HepG2 (cell line): ENCODE measurements at regions of chr5 and their contacts with region 1.

Region 1: DNA sequence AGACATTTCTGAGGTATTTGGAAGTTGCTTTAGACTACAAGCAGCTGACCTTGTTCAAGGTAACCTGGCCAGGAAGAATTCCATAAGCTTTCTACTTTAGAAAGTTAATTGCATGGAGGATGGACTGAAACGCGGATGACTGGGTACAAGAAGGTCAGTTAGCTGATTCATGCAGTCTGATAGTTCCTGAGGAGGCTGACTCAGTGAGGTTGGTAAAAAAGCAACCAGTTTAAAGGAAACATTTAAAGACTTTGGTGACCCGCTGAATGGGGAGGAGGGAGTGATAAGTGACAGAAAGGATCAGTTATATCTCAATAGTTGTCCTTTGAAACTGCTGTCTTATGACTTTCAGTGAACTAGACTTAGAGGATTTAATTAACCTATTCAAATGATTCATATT is 670.2 kb upstream of the CDH9 start:
- DNase-seq: no peak
- ATAC-seq: no peak
- H3K4me3 ChIP-seq: no peak overlapping the region
- H3K27ac ChIP-seq: no peak overlapping the region
- H3K4me1 ChIP-seq: no peaks in the 10 kb centered on the region
- H3K27me3 ChIP-seq: no peaks in the 10 kb centered on the region
- CTCF ChIP-seq: no peak
- EP300 ChIP-seq: no peak
- POLR2A ChIP-seq: no peak
- RAD21 ChIP-seq: no peak

Region 2: DNA sequence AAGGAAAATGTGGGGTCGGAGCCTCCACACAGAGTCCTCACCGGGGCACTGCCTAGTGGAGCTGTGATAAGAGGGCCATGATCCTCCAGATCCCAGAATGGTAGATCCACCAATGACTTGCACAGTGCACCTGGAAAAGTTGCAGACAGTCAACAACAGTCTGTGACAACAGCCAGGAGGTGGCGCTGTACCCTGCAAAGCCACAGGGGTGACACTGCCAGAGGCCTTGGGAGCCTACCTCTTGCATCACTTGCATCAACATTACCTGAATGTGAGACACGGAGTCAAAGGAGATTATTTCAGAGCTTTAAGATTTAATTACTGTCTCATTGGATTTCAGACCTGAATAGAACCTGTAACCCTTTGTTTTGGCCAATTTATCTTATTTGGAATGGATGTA is 56.1 kb before region 1 on chr5:
- CTCF ChIA-PET with region 1: no interaction called
- POLR2A ChIA-PET with region 1: no interaction called
- in situ Hi-C with region 1: no loop called
- intact Hi-C with region 1: loop called (anchors 1 kb)
- DNase-seq: peak; percentile 17
- ATAC-seq: peak; percentile 92
- H3K4me3 ChIP-seq: no peak overlapping the region
- H3K27ac ChIP-seq: no peak overlapping the region
- H3K4me1 ChIP-seq: no peaks in the 10 kb centered on the region
- H3K27me3 ChIP-seq: no peaks in the 10 kb centered on the region
- CTCF ChIP-seq: peak; percentile 57
- EP300 ChIP-seq: no peak
- POLR2A ChIP-seq: no peak
- RAD21 ChIP-seq: no peak